ENCODE measurements at regions of chr12 and their contacts with region 1.

Region 1: GRCh38 chr12:108099073-108099472 is 30.0 kb upstream of the WSCD2 start:
- DNase-seq: no peak
- ATAC-seq: no peak
- H3K4me3 ChIP-seq: no peak overlapping the region
- H3K27ac ChIP-seq: no peak overlapping the region
- H3K4me1 ChIP-seq: no peaks in the 10 kb centered on the region
- H3K27me3 ChIP-seq: peaks cover 3% of the 10 kb centered on the region
- CTCF ChIP-seq: peak; percentile 39

Region 2: GRCh38 chr12:108468201-108468968 is 369.3 kb after region 1 on chr12:
- intact Hi-C with region 1: loop called (anchors 10 kb)
- DNase-seq: no peak
- ATAC-seq: no peak
- H3K4me3 ChIP-seq: no peak overlapping the region
- H3K27ac ChIP-seq: no peak overlapping the region
- H3K4me1 ChIP-seq: no peaks in the 10 kb centered on the region
- H3K27me3 ChIP-seq: peaks cover 27% of the 10 kb centered on the region
- CTCF ChIP-seq: no peak

Measured in upper lobe of right lung (tissue), 1 donor.